ENCODE measurements at regions of chr2 and their contacts with region 1.

Region 1: GRCh38 chr2:178480227-178481181 is at the start of gene PLEKHA3:
- DNase-seq: peak; percentile 94 to 95
- H3K4me3 ChIP-seq: peak within 1 kb of the TSS; percentile 60
- H3K4me3 Mint-ChIP-seq: peak within 1 kb of the TSS; percentile 99
- H3K27ac Mint-ChIP-seq: peak within 1 kb of the TSS; percentile 96
- H3K4me1 ChIP-seq: peaks cover 7% of the 10 kb centered on the region; the same call in 1 of the 2 replicates
- H3K4me1 Mint-ChIP-seq: peaks cover 5% of the 10 kb centered on the region
- H3K27me3 ChIP-seq: no peaks in the 10 kb centered on the region
- H3K27me3 Mint-ChIP-seq: no peaks in the 10 kb centered on the region
- CTCF ChIP-seq: no peak
- total RNA-seq, gene PLEKHA3: 16.9 and 18.5 TPM in 2 replicates

Region 2: GRCh38 chr2:178450774-178451525 is 29.6 kb before region 1 on chr2 and contains the starts of genes PJVK and PRKRA:
- CTCF ChIA-PET with region 1: interaction called, 5 read pairs
- POLR2A ChIA-PET with region 1: interaction called, 22 read pairs
- intact Hi-C with region 1: loop called (anchors 1 kb)
- DNase-seq: peak; percentile 97 to 99
- H3K4me3 ChIP-seq: peak within 1 kb of the TSS; percentile 99
- H3K4me3 Mint-ChIP-seq: peak within 1 kb of the TSS; percentile 93
- H3K27ac Mint-ChIP-seq: peak within 1 kb of the TSS; percentile 100
- H3K4me1 ChIP-seq: no peaks in the 10 kb centered on the region
- H3K4me1 Mint-ChIP-seq: peaks cover 11% of the 10 kb centered on the region
- H3K27me3 ChIP-seq: no peaks in the 10 kb centered on the region
- H3K27me3 Mint-ChIP-seq: peaks cover 5% of the 10 kb centered on the region
- CTCF ChIP-seq: peak in 1 of 2 experiments; percentile 1
- total RNA-seq, gene PJVK: 2.1 and 2.9 TPM in 2 replicates
- total RNA-seq, gene PRKRA: 58.3 and 60.2 TPM in 2 replicates

Region 3: DNA sequence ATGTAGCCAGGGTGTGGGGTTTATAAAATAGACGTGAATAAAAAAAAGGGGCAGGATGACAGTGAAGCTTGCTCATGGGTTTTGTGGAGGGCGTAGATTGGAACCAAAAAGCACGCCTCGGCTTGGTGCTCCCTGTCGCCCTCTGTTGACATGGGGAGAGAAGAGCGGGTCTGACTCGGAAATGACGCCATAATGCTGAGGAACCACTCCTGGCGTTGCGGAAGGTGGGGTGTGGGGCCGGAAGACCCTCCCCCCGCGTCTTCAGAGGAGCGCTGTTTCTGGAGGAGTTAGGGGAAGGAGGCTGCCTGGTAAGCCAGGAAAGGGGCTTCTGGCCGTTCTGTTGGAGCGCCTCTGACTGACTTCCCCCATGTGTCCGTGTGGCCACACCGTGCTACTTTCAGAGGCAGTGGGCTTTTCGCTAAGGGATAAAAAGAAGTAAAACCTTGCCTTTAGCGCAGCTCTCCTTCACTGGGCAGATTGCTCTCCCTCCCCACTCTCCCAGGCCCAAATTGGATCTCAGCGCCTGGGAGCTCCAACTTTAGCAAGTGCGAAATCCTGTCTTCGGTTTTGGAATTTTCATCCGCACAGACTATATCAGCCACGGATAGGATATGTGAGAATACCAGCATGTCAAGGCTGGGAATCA is 42.6 kb after region 1 on chr2:
- CTCF ChIA-PET with region 1: interaction called, 3 read pairs
- POLR2A ChIA-PET with region 1: no interaction called
- intact Hi-C with region 1: loop called (anchors 1 kb)
- DNase-seq: peak; percentile 83 to 87
- H3K4me3 ChIP-seq: peak overlapping the region; percentile 66
- H3K4me3 Mint-ChIP-seq: peak overlapping the region; percentile 89
- H3K27ac Mint-ChIP-seq: peak overlapping the region; percentile 87
- H3K4me1 ChIP-seq: 0 out of 2 replicates have a peak, but pooled peaks cover 2% of the 10 kb centered on the region
- H3K4me1 Mint-ChIP-seq: no peaks in the 10 kb centered on the region
- H3K27me3 ChIP-seq: no peaks in the 10 kb centered on the region
- H3K27me3 Mint-ChIP-seq: no peaks in the 10 kb centered on the region
- CTCF ChIP-seq: peak; percentile 77 to 89

Measured in Caco-2 (cell line).